ENCODE measurements at regions of chr14 and their contacts with region 1.

Region 1: DNA sequence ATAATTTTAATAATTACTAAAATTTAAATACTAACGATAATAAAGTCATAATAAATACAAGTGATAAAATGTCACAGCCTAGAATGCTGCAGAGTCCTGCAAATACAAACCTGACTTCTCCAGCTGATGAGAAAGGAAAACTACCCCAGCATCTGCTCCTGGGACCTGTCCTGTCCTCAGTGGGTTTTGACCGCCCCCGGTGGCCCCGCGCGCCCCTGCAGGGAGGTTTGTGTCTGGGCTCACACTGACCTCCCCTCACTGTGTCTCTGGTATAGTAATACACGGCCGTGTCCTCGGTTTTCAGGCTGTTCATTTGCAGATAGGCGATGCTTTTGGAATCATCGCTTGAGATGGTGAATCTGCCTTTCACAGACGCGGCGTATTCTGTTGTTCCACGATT is 1139.4 kb downstream of the TMEM121 start:
- DNase-seq: no peak
- H3K4me3 Mint-ChIP-seq: no peak overlapping the region
- H3K27ac Mint-ChIP-seq: no peak overlapping the region
- H3K4me1 Mint-ChIP-seq: peaks cover 9% of the 10 kb centered on the region
- H3K27me3 Mint-ChIP-seq: peaks cover 30% of the 10 kb centered on the region

Region 2: GRCh38 chr14:106511006-106511799 is 154.6 kb before region 1 on chr14:
- CTCF ChIA-PET with region 1: no interaction called
- DNase-seq: peak; percentile 76
- H3K4me3 Mint-ChIP-seq: peak overlapping the region; percentile 28
- H3K27ac Mint-ChIP-seq: peak overlapping the region; percentile 92
- H3K4me1 Mint-ChIP-seq: peaks cover 69% of the 10 kb centered on the region
- H3K27me3 Mint-ChIP-seq: peaks cover 7% of the 10 kb centered on the region

Region 3: GRCh38 chr14:106622200-106622745 is 43.5 kb before region 1 on chr14:
- CTCF ChIA-PET with region 1: interaction called, 21 read pairs
- DNase-seq: peak; percentile 49
- H3K4me3 Mint-ChIP-seq: no peak overlapping the region
- H3K27ac Mint-ChIP-seq: no peak overlapping the region
- H3K4me1 Mint-ChIP-seq: peaks cover 14% of the 10 kb centered on the region
- H3K27me3 Mint-ChIP-seq: peaks cover 66% of the 10 kb centered on the region

Region 4: GRCh38 chr14:106681568-106681967 is 15.8 kb after region 1 on chr14:
- CTCF ChIA-PET with region 1: interaction called, 82 read pairs
- DNase-seq: peak; percentile 23
- H3K4me3 Mint-ChIP-seq: no peak overlapping the region
- H3K27ac Mint-ChIP-seq: no peak overlapping the region
- H3K4me1 Mint-ChIP-seq: no peaks in the 10 kb centered on the region
- H3K27me3 Mint-ChIP-seq: peaks cover 44% of the 10 kb centered on the region

Region 5: DNA sequence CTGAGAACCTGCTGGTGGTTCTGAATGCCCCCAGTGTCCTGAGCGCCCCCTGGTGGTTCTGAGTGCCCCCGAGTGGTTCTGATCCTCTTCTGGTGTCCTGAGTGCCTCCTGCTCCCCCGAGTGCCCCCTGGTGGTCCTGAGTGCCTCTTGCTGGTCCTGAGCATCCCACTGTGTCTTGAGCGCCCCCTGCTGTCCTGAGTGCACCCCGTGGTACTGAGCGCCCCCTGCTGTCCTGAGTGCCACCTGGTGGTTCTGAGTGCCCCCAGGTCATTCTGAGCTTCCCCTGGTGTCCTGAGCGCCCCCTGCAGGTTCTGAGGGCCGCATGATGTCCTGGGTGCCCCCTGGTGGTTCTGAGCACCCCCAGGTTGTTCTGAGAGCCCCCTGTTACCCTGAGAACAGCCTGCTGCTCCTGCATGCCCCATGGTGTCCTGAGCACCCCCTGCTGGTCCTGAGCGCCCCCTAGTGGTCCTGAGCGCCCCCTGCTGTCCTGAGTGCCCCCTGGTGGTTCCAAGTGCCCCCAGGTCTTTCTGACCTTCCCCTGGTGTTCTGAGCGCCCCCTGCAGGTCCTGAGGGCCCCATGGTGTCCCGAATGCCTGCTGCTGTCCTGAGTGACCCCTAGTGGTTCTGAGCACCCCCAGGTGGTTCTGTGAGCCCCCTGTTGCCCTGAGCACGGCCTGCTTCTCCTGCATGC is 25.9 kb after region 1 on chr14:
- CTCF ChIA-PET with region 1: interaction called, 20 read pairs
- DNase-seq: peak; percentile 75
- H3K4me3 Mint-ChIP-seq: no peak overlapping the region
- H3K27ac Mint-ChIP-seq: no peak overlapping the region
- H3K4me1 Mint-ChIP-seq: peaks cover 14% of the 10 kb centered on the region
- H3K27me3 Mint-ChIP-seq: peaks cover 28% of the 10 kb centered on the region

Region 6: DNA sequence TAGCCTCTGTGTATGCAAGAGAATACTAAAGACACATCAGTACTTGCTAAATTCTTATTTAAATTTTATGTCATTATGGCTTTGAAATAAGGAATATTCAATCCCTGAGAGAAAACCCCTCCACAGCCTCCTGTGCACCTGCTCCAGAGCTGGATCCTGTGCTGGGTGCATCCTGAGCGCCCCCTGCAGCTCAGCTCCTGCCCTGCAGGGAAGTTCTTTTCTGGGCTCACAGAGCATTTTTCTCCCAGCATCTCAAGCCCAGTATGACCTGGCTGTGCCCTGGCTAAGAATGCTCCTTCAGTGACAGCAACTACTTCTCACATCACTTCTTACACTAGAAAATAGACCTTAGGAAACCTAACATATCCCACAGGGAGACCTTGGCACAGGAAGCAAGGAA is 72.3 kb after region 1 on chr14:
- CTCF ChIA-PET with region 1: interaction called, 11 read pairs
- DNase-seq: peak; percentile 27
- H3K4me3 Mint-ChIP-seq: no peak overlapping the region
- H3K27ac Mint-ChIP-seq: no peak overlapping the region
- H3K4me1 Mint-ChIP-seq: peaks cover 7% of the 10 kb centered on the region
- H3K27me3 Mint-ChIP-seq: peaks cover 33% of the 10 kb centered on the region